Heart right ventricle (tissue), 16 donors: ENCODE measurements at regions of chr9 and their contacts with region 1.

Region 1: DNA sequence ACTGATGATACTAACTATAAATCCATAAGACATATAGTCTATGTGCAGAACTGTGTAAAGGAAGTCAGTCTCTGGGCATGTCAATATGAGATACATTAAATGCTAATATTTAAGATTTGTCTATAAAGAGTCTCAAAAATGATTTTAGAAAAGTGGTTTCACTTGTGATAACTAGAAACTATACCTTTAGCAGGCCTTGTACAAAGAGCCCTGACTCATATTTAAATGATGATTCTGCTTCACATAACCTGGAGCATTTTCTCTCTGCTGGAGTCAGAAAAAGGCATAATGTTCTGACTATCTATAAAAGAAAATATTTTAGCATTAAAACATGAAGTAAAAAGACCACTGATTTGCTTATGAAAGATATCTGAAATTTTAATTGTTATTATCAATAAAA is 15.0 kb downstream of the C9orf72 start:
- DNase-seq: no peak
- ATAC-seq: no peak
- H3K4me3 ChIP-seq: no peak overlapping the region
- H3K27ac ChIP-seq: no peak overlapping the region
- H3K4me1 ChIP-seq: peaks cover 0 to 2% (median 0%) of the 10 kb centered on the region in 9 donors
- H3K27me3 ChIP-seq: no peaks in the 10 kb centered on the region
- CTCF ChIP-seq: no peak

Region 2: GRCh38 chr9:27022920-27023319 is 535.4 kb before region 1 on chr9:
- intact Hi-C with region 1: loop called in 1 of 10 experiments (anchors 10 kb)
- DNase-seq: no peak
- ATAC-seq: no peak
- H3K4me3 ChIP-seq: no peak overlapping the region
- H3K27ac ChIP-seq: no peak overlapping the region
- H3K4me1 ChIP-seq: no peaks in the 10 kb centered on the region
- H3K27me3 ChIP-seq: no peaks in the 10 kb centered on the region
- CTCF ChIP-seq: no peak